H1 (cell line): ENCODE measurements at regions of chr1 and their contacts with region 1.

Region 1: DNA sequence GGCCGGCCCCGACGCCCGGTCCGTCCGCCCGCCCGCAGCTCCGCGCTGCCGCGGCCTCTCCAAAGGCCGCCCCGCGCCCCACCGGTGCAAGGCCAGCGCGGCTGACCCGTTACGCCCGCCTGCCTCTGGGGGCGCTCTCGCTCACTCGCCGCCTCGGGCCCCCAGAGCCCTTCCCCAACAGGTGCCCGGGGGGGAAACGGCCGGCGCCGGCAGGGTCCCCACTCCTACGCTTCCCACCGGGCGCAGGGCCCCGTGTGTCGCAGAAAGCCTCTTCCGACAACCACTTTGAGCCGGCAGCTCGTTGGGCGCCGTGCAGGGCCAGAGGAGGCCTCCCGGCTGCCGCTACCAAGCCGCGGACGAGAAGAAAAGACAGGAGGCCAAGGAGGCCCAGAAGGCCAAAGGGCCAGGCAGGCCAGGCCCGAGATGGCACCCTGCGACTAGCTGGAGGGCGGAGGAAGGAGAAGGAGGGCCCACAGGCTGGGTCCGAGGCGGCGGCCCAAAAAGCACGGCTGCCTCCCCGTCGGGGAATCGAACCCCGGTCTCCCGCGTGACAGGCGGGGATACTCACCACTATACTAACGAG is 64.9 kb upstream of the FCGR2A start:
- DNase-seq: peak; percentile 41 to 85
- H3K4me3 ChIP-seq: peak overlapping the region; percentile 61 to 88 (median 75)
- H3K27ac ChIP-seq: no peak overlapping the region
- H3K4me1 ChIP-seq: peaks cover 0 to 5% (median 2%) of the 10 kb centered on the region in 4 experiments; a peak in 3 of 7 replicates
- H3K27me3 ChIP-seq: peaks cover 12 to 38% (median 24%) of the 10 kb centered on the region in 4 experiments
- CTCF ChIP-seq: peak; percentile 62 to 82 (median 65)
- EP300 ChIP-seq: no peak
- POLR2A ChIP-seq: no peak
- RAD21 ChIP-seq: peak in 1 of 2 experiments; percentile 35; a peak in 2 of 4 replicates

Region 2: DNA sequence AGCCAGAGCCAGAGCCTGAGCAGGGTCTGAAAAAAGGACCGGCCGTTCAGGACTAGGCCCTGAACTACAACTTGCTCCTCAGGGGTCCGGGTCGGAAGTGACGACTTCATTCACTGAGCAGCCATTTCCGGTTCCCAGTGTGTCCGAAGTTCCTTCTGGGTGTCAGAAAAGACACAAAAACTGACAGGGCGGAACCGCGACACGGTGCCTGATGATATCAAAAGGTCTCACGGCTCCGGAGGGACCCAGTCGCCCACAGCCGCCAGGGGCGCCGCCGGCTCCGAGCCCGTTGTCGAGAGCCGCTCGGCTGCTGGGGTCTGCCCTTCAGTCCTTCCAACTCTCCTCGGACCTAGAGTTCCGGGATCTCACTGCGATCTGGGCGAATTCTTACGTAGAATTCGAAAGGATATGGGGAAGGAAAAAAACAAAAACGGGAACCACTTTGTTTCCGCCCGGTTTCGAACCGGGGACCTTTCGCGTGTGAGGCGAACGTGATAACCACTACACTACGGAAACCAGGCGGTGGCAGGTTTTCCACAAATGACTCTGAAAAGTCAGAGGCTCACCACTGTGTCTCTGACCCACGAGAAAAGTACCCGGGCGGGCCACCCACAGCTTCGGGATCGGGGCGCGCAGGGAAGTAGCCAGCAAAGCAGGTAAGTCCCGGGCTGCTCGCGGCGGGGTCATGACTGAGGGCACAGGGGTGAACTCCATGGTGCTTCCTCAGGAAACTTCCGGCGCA is 41.0 kb before region 1 on chr1:
- CTCF ChIA-PET with region 1: interaction called, 10 read pairs
- POLR2A ChIA-PET with region 1: no interaction called
- DNase-seq: peak; percentile 78 to 92
- H3K4me3 ChIP-seq: peak overlapping the region; percentile 76 to 97 (median 90)
- H3K27ac ChIP-seq: peak overlapping the region; percentile 65; the same call in 1 of the 2 replicates
- H3K4me1 ChIP-seq: peaks cover 0 to 2% (median under 1%) of the 10 kb centered on the region in 4 experiments; a peak in 3 of 7 replicates
- H3K27me3 ChIP-seq: no peaks in the 10 kb centered on the region
- CTCF ChIP-seq: peak in 2 of 3 experiments; percentile 34 to 39; a peak in 3 of 4 replicates
- EP300 ChIP-seq: no peak
- POLR2A ChIP-seq: peak; percentile 67 to 74; a peak in 2 of 3 replicates
- RAD21 ChIP-seq: no peak

Region 3: DNA sequence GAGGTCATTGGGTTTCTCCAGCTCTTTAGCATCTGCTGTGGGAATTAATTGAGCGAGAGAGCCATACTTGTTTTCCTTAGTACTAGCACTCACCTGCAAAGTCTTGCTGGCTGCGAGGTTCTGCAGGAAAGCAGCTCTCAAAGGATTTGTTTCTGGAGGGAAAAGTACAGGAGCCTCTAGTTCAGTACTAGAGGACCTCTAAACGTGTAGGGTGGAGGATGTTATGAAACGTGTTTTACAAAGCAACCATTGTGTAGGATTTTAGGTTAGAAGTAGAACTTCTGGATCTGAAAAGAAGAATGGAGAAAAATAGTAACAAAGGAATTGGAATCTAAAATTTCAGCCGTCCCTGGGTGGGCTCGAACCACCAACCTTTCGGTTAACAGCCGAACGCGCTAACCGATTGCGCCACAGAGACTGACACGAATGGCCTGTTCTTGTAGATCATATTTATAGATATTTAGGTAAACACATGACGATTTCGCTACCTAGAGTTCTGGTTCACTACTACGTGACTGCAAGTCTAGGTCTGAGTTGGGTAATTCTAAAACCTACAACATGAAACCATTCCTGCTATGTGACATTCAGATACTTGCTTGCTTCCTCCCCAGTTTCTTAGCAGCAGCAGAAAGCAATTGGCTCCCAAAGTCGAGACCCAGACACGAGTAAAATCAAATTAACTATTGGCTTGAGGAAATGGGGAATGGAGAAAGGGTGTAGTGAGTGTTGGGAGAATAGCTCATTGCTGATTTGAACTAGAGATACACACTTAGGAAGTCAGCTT is 12.5 kb before region 1 on chr1:
- CTCF ChIA-PET with region 1: interaction called, 26 read pairs
- POLR2A ChIA-PET with region 1: interaction called, 27 read pairs
- DNase-seq: peak in 1 of 2 experiments; percentile 87
- H3K4me3 ChIP-seq: peak overlapping the region; percentile 53 to 75 (median 62)
- H3K27ac ChIP-seq: no peak overlapping the region
- H3K4me1 ChIP-seq: no peaks in the 10 kb centered on the region
- H3K27me3 ChIP-seq: peaks cover 0 to 1% (median 0%) of the 10 kb centered on the region in 4 experiments; a peak in 3 of 7 replicates
- CTCF ChIP-seq: no peak
- EP300 ChIP-seq: peak in 1 of 2 experiments; percentile 21; a peak in 1 of 3 replicates
- POLR2A ChIP-seq: no peak
- RAD21 ChIP-seq: no peak

Region 4: DNA sequence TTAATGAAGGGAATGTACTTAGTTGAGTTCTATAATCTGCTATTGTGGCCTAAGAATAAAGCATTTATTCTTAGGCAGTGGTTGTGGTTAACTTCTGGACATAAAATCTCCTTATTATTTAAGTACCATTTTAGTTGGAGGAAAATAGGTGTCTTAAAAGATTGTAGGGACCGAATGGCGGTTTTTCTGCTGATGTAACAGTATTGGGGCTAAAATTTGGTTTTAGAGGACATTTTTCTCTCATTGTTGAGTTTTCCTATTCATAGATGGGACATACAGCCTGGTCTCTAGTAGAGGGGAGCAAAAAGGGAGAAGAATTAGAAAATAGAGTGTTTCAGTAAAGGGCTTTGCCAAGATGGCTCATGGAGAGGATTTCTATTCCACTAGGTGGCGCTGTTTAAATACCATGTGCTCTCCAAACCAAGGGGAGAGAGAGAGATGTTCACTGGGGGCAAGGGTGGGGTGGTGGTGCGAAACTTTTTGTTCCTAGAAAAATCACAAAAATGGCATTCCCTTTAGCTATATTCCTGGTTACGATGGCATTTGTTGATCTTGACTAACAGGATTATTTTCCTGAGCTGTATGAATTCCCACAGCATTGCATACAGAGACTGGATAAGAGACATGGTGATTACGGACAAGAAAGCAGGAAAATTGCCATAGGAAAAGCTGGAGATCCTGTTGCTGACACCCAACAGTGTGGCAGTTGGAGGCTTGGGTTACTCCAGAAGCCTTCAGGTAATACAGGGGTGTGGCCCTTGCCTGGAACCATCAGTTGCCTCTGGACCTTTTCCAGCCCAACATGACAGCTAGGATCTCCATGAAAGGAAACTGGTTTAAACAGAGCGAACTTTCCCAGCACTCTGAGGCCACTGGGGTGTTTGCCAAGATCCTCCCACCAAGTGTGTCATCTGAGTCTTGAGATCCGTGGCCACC is 46.7 kb after region 1 on chr1:
- CTCF ChIA-PET with region 1: no interaction called
- POLR2A ChIA-PET with region 1: no interaction called
- DNase-seq: no peak
- H3K4me3 ChIP-seq: no peak overlapping the region
- H3K27ac ChIP-seq: no peak overlapping the region
- H3K4me1 ChIP-seq: no peaks in the 10 kb centered on the region
- H3K27me3 ChIP-seq: peaks cover 0 to under 1% (median 0%) of the 10 kb centered on the region in 4 experiments; a peak in 2 of 7 replicates
- CTCF ChIP-seq: peak in 2 of 3 experiments; percentile 65; a peak in 3 of 4 replicates
- EP300 ChIP-seq: no peak
- POLR2A ChIP-seq: no peak
- RAD21 ChIP-seq: peak; percentile 79 to 80